ENCODE measurements at regions of chr3 and their contacts with region 1.

Region 1: GRCh38 chr3:37072892-37073291 is 79.6 kb downstream of the MLH1 start:
- DNase-seq: no peak
- H3K4me3 ChIP-seq: peak overlapping the region in 1 of 2 donors; percentile 12
- H3K27ac ChIP-seq: peak overlapping the region; percentile 81 to 85
- H3K4me1 ChIP-seq: peaks cover 3 to 46% of the 10 kb centered on the region in 2 donors
- H3K27me3 ChIP-seq: no peaks in the 10 kb centered on the region
- CTCF ChIP-seq: no peak

Region 2: DNA sequence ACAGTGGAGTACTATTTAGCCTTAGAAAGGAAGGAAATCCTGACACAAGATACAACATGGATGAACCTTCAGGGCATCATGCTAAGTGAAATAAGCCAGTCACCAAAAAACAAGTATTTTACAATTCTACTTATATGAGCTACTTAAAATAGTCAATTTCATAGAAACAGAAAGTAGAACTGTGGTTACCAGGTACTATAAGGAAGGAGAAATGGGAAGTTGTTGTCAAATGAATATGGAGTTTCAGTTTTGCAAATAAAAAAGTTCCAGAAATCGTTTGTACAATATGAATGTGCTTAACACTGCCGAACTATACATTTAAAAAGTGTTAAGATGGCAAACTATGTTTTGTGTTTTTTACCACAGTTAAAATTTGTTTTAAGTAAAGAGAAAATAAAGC is 154.8 kb before region 1 on chr3:
- intact Hi-C with region 1: no loop called
- DNase-seq: no peak
- H3K4me3 ChIP-seq: no peak overlapping the region
- H3K27ac ChIP-seq: no peak overlapping the region
- H3K4me1 ChIP-seq: no peaks in the 10 kb centered on the region
- H3K27me3 ChIP-seq: no peaks in the 10 kb centered on the region
- CTCF ChIP-seq: no peak

Region 3: GRCh38 chr3:37032961-37033360 is 39.9 kb before region 1 on chr3:
- intact Hi-C with region 1: loop called (anchors 2 kb)
- DNase-seq: no peak
- H3K4me3 ChIP-seq: peak overlapping the region in 1 of 2 donors; percentile 36
- H3K27ac ChIP-seq: peak overlapping the region; percentile 56 to 64
- H3K4me1 ChIP-seq: peaks cover 9 to 27% of the 10 kb centered on the region in 2 donors
- H3K27me3 ChIP-seq: no peaks in the 10 kb centered on the region
- CTCF ChIP-seq: no peak

Region 4: DNA sequence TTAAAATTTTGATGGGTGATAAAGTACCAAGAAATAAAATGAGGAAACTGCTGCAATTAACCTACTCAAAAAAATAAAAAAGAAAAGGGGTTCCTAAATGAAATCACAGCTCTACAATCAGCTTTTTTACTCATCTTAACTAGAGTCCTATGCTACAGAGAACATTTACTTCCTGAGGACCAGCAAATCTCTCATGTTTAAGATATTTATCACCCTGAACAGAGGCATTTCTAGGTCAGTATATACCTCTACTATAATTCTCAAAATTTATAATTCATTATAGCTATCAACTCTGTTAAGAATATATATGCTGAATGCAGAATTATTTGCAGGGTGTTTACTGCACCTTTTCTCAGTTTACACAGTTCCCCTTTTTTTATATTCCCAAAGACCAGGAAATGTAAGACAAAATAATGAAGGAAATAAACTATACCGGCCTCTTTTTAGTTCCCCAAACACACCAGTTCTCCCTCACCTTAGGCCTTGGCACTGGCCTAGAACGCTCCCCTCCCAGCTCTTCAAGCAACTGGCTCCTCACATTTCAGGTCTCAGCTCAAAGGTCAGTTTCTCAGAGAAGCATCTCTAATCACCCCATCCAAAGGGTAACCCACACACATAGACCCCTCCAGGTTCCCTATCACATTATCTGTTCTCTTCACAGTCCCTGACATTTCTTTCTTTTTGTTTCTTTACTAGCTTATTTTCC is 30.4 kb after region 1 on chr3:
- intact Hi-C with region 1: no loop called
- DNase-seq: no peak
- H3K4me3 ChIP-seq: no peak overlapping the region
- H3K27ac ChIP-seq: no peak overlapping the region
- H3K4me1 ChIP-seq: peaks cover 0 to 3% of the 10 kb centered on the region in 2 donors
- H3K27me3 ChIP-seq: no peaks in the 10 kb centered on the region
- CTCF ChIP-seq: no peak

Region 5: DNA sequence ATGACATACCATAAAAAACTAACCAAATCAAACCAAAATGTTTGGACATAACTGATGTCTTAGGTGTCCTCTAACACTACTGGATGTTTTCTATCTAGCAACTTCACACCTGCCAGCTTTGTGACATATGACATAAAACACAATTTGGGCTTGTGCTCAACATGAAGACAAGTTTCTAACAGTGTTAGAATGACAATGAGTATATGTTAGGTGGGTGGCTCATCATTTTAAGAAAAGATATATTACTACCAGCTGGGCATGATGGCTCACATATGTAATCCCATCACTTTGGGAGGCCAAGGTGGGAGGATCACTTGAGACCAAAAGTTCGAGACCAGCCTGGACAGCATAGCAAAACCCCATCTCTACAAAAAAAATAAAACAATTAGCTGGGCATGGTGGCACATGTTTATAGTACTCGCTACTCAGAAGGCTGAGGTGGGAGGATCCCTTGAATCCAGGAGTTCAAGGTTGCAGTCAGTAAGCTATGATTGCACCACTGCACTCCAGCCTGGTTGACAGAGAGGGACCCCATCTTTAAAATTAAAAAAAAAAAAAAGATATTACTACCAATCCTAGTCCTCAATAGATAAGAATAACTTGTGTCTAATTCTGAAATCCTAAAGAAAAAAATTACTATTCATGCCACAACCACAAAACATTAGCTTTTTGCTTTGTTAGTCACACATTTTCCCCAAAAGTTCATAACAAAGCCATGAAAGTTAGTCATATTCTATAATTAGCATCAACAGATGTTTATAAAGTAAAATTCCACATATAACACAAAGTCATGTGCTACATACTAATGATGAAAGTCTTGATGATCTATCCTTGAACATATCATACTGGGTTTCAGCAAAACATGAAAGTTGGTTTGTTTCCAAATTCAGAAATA is 41.6 kb after region 1 on chr3:
- intact Hi-C with region 1: loop called (anchors 5 kb)
- DNase-seq: no peak
- H3K4me3 ChIP-seq: no peak overlapping the region
- H3K27ac ChIP-seq: peak overlapping the region; percentile 80 to 82
- H3K4me1 ChIP-seq: peaks cover 3 to 33% of the 10 kb centered on the region in 2 donors
- H3K27me3 ChIP-seq: no peaks in the 10 kb centered on the region
- CTCF ChIP-seq: no peak

Region 6: GRCh38 chr3:37210230-37210629 is 137.3 kb after region 1 on chr3:
- intact Hi-C with region 1: no loop called
- DNase-seq: no peak
- H3K4me3 ChIP-seq: no peak overlapping the region
- H3K27ac ChIP-seq: peak overlapping the region in 1 of 2 donors; percentile 14
- H3K4me1 ChIP-seq: no peaks in the 10 kb centered on the region
- H3K27me3 ChIP-seq: no peaks in the 10 kb centered on the region
- CTCF ChIP-seq: no peak

Region 7: GRCh38 chr3:37546905-37547304 is 474.0 kb after region 1 on chr3:
- intact Hi-C with region 1: no loop called
- DNase-seq: peak in 1 of 2 donors; percentile 78
- H3K4me3 ChIP-seq: no peak overlapping the region
- H3K27ac ChIP-seq: peak overlapping the region; percentile 41 to 79
- H3K4me1 ChIP-seq: peaks cover 0 to 19% of the 10 kb centered on the region in 2 donors
- H3K27me3 ChIP-seq: no peaks in the 10 kb centered on the region
- CTCF ChIP-seq: peak; percentile 14 to 33 (median 30)

Measured in ascending aorta (tissue), 2 donors.